HAP-1 (cell line): ENCODE measurements at regions of chrX and their contacts with region 1.

Region 1: DNA sequence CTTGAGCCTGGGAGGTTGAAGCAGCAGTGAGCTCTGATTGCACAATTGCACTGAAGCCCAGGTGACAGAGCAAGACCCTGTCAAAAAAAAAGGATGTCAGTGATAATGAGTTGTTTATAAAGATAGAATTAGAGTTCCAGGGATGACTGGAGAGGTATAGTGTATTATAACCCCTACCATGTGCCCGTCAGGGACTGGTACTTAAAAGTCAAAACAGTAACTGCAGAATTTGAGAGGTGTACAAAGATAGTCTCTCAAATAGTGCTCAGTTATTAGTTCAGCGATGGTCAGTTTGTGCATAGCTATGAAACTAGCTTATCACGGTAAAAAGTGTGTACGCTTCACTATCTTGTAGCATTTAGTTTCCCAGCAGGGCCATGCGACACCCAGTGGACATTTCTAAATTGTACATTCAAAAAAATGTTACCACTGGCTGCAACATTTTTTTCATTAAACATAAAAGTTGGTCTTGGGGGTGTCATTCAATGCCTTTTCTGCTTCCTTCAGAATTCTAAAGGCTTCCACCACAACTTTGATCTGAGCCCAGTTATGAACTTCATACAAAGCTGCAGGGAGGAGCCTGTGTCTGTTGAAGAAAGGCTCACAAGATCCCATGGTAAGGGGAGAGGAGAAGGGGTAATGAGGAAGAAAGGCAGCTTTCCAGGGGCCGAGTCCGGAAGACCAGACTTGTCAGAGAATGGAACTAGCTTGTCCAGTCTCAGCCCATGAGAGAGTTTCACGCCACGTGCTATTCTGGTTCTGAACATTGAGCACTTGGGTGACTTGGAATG is 9.2 kb upstream of the GYG2 start:
- DNase-seq: peak; percentile 52 to 59
- H3K4me3 ChIP-seq: no peak overlapping the region
- H3K4me1 ChIP-seq: no peaks in the 10 kb centered on the region
- H3K27me3 ChIP-seq: no peaks in the 10 kb centered on the region; the same call in 1 of the 2 replicates

Region 2: DNA sequence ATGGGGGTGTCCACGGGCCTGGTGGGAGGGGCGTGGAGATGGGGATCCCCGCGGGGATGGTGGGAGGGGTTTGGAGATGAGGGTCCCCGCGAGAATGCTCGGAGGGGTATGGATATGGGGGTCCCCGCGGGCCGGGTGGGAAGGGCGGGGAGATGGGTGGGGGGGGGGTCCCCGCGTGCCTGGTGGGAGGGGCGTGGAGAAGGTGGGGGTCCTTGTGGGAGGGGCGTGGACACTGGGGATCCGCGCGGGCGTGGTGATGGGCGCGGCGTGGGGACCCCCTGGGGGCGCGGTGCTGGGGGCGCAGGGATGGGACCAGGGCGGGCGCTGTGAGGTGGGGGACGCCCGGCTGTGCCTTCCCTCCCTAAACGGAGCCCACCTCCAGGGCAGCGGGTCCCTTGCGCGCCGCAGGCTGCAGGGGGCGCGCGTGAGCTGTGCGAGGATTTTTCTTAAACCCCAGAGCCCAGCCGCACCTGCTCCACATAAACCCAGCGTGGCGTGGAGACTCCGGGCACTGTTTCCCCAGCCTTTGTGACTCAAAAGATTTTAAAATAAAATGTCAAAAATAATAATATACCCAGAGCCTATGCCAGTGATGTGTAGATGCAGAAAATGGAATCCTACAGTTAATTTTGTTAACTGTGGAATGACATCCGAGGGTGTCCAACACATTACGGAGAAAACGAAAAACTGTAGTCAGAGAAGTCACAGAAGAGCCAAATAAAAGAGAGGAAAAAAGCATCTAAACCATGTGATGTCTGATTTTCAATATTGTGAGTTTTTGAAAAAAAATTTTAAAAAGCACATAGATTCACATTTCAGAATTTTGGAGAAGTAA is 1365.4 kb before region 1 on chrX:
- in situ Hi-C with region 1: loop called (anchors 25 kb)
- DNase-seq: peak; percentile 69 to 92
- H3K4me3 ChIP-seq: no peak overlapping the region
- H3K4me1 ChIP-seq: no peaks in the 10 kb centered on the region
- H3K27me3 ChIP-seq: no peaks in the 10 kb centered on the region

Region 3: GRCh38 chrX:1657367-1658070 is 1162.0 kb before region 1 on chrX:
- in situ Hi-C with region 1: loop called (anchors 10 kb)
- DNase-seq: peak in 1 of 2 experiments; percentile 28
- H3K4me3 ChIP-seq: no peak overlapping the region
- H3K4me1 ChIP-seq: peaks cover 3% of the 10 kb centered on the region; the same call in 1 of the 2 replicates
- H3K27me3 ChIP-seq: no peaks in the 10 kb centered on the region

Region 4: GRCh38 chrX:2457289-2458133 is 362.0 kb before region 1 on chrX:
- in situ Hi-C with region 1: no loop called
- DNase-seq: peak; percentile 56 to 74
- H3K4me3 ChIP-seq: no peak overlapping the region
- H3K4me1 ChIP-seq: no peaks in the 10 kb centered on the region; the same call in 1 of the 2 replicates
- H3K27me3 ChIP-seq: no peaks in the 10 kb centered on the region

Region 5: GRCh38 chrX:2640275-2641150 is 179.0 kb before region 1 on chrX:
- in situ Hi-C with region 1: loop called (anchors 10 kb)
- DNase-seq: no peak
- H3K4me3 ChIP-seq: no peak overlapping the region
- H3K4me1 ChIP-seq: peaks cover 3% of the 10 kb centered on the region; the same call in 1 of the 2 replicates
- H3K27me3 ChIP-seq: no peaks in the 10 kb centered on the region

Region 6: DNA sequence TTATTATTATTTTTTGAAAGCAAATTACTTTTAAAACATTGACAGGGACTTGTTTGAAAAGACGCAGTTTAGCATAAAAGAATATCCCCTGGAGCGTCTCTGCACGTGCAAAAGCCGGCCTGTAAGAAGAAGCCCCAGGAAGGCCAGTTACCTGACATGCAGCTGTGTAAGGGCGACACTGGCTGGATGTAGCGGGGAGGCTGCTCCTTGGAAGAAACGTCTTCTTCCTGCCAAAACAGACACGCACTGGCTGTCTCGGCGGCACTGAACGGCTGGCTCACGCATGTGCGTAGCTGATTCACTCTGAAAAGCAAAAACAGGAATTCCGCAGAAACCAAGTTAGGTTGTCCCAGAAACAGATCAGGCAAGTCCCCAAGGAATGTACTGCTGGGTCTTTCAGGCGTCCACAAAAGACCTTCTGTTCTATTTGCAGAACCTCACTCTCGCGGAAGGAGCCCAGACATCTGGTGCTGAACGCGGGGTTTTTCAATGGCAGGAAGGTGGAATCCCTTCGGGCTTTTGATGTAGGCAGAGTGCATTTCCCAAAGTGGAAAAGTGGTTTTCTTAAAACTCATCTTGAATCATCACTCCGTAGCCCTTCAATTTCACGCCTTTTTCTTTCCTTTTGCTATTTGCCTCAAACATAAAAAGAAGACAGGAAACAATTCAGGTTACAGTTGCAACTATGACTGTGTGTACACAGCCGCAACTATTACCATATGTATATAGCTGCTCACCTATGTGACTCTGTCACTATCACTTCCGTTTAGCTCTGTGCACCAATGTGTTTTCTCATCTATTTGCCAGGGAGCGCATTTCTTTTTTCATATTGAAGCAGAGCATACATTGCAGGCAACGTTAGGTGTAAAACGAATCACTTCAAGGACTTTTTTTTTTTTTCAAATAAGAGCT is 148.7 kb after region 1 on chrX:
- in situ Hi-C with region 1: no loop called
- DNase-seq: no peak
- H3K4me3 ChIP-seq: no peak overlapping the region
- H3K4me1 ChIP-seq: peaks cover 2% of the 10 kb centered on the region; the same call in 1 of the 2 replicates
- H3K27me3 ChIP-seq: no peaks in the 10 kb centered on the region